ENCODE measurements at regions of chr7 and their contacts with region 1.

Region 1: GRCh38 chr7:99990460-99990852 is 14.6 kb upstream of the AZGP1 start:
- DNase-seq: no peak
- H3K4me3 ChIP-seq: peak overlapping the region; percentile 21 to 35 (median 28)
- H3K27ac ChIP-seq: no peak overlapping the region
- H3K4me1 ChIP-seq: peaks cover 14 to 22% (median 18%) of the 10 kb centered on the region in 4 donors
- H3K27me3 ChIP-seq: no peaks in the 10 kb centered on the region
- CTCF ChIP-seq: no peak
- EP300 ChIP-seq: no peak
- POLR2A ChIP-seq: no peak

Region 2: GRCh38 chr7:99910976-99911375 is 79.5 kb before region 1 on chr7:
- intact Hi-C with region 1: loop called (anchors 5 kb)
- DNase-seq: no peak
- H3K4me3 ChIP-seq: no peak overlapping the region
- H3K27ac ChIP-seq: no peak overlapping the region
- H3K4me1 ChIP-seq: peaks cover 0 to 22% (median 18%) of the 10 kb centered on the region in 4 donors
- H3K27me3 ChIP-seq: no peaks in the 10 kb centered on the region
- CTCF ChIP-seq: no peak
- EP300 ChIP-seq: no peak
- POLR2A ChIP-seq: no peak

Region 3: GRCh38 chr7:100035876-100036275 is 45.4 kb after region 1 on chr7:
- intact Hi-C with region 1: no loop called
- DNase-seq: no peak
- H3K4me3 ChIP-seq: no peak overlapping the region
- H3K27ac ChIP-seq: no peak overlapping the region
- H3K4me1 ChIP-seq: no peaks in the 10 kb centered on the region
- H3K27me3 ChIP-seq: no peaks in the 10 kb centered on the region
- CTCF ChIP-seq: no peak
- EP300 ChIP-seq: no peak
- POLR2A ChIP-seq: no peak

Region 4: DNA sequence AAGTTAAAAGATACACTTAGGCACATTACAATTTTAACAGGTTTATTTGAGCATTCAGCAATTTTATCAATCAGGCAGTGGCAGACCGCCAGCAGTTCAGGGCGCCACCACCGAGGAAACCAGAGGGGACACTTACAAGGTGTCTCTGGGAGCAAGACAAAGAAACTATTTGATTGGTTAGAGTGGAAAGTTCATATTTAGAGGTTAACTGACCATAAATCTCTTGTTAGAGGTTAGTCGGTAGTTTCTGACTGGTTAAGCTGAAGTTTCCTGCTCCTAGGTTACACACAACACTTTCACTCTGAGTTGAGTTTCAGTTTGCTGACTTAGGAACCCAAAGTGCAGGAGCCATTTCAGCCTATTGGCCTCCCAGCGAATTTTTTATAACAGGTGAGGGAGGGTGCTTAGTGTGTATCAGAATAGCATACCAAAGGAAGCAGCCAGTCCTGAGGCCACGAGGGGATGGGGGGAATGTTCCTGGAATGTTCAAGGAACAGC is 218.5 kb after region 1 on chr7:
- intact Hi-C with region 1: no loop called
- DNase-seq: no peak
- H3K4me3 ChIP-seq: no peak overlapping the region
- H3K27ac ChIP-seq: no peak overlapping the region
- H3K4me1 ChIP-seq: no peaks in the 10 kb centered on the region
- H3K27me3 ChIP-seq: no peaks in the 10 kb centered on the region
- CTCF ChIP-seq: no peak
- EP300 ChIP-seq: no peak
- POLR2A ChIP-seq: no peak

Measured in esophagus muscularis mucosa (tissue), 4 donors.